Activated CD8-positive, alpha-beta memory T cell treated with anti-CD3 and anti-CD28 coated beads, Interleukin-2, amount 10 ng/mL, durations not matched to agents 7 days and 5 days (primary cell): ENCODE measurements at regions of chr1 and their contacts with region 1.

Region 1: GRCh38 chr1:86499987-86500593 is 31.4 kb downstream of the CLCA1 start:
- DNase-seq: no peak
- ATAC-seq: no peak
- H3K4me3 Mint-ChIP-seq: no peak overlapping the region
- H3K27ac Mint-ChIP-seq: no peak overlapping the region
- H3K4me1 Mint-ChIP-seq: peaks cover 22% of the 10 kb centered on the region
- H3K27me3 Mint-ChIP-seq: peaks cover 30% of the 10 kb centered on the region

Region 2: DNA sequence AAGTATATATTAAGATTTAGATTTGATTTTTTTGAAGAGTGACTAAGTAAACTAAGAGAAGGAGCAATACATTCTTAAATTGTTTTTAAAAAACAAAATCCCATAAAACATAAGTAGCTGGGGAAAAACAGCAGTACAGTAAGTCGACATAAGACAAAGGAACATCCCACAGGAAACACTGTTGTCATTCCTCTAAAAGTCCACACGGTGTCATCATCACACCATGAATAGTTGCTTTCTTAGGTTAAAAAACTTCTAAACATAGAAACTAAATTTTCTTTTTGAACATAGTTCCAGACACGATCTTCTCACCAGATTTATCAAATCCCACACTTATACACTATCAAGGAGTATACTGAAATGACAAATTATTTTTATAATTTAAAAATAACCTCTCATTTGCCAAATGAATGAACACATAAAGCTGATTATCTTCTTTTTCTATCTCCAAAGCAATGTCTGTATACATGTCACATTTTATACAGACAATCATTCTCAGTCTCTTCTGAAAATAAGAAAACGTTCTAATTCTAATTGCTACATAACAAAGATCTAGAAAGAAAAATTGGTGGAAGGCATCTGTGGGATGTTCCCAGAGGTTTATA is 119.7 kb before region 1 on chr1:
- CTCF ChIA-PET with region 1: interaction called, 74 read pairs
- DNase-seq: no peak
- ATAC-seq: peak; percentile 72
- H3K4me3 Mint-ChIP-seq: no peak overlapping the region
- H3K27ac Mint-ChIP-seq: no peak overlapping the region
- H3K4me1 Mint-ChIP-seq: peaks cover 16% of the 10 kb centered on the region
- H3K27me3 Mint-ChIP-seq: no peaks in the 10 kb centered on the region

Region 3: GRCh38 chr1:86395771-86396497 is 104.2 kb before region 1 on chr1 and contains the start of gene ODF2L:
- CTCF ChIA-PET with region 1: interaction called, 14 read pairs
- DNase-seq: peak; percentile 96
- ATAC-seq: peak; percentile 100
- H3K4me3 Mint-ChIP-seq: peak within 1 kb of the TSS; percentile 90
- H3K27ac Mint-ChIP-seq: peak within 1 kb of the TSS; percentile 90
- H3K4me1 Mint-ChIP-seq: peaks cover 48% of the 10 kb centered on the region
- H3K27me3 Mint-ChIP-seq: no peaks in the 10 kb centered on the region
- total RNA-seq, gene ODF2L: 45.6 to 69.2 TPM

Region 4: GRCh38 chr1:86416343-86416742 is 83.7 kb before region 1 on chr1:
- CTCF ChIA-PET with region 1: interaction called, 16 read pairs
- DNase-seq: no peak
- ATAC-seq: no peak
- H3K4me3 Mint-ChIP-seq: no peak overlapping the region
- H3K27ac Mint-ChIP-seq: no peak overlapping the region
- H3K4me1 Mint-ChIP-seq: peaks cover 7% of the 10 kb centered on the region
- H3K27me3 Mint-ChIP-seq: no peaks in the 10 kb centered on the region

Region 5: DNA sequence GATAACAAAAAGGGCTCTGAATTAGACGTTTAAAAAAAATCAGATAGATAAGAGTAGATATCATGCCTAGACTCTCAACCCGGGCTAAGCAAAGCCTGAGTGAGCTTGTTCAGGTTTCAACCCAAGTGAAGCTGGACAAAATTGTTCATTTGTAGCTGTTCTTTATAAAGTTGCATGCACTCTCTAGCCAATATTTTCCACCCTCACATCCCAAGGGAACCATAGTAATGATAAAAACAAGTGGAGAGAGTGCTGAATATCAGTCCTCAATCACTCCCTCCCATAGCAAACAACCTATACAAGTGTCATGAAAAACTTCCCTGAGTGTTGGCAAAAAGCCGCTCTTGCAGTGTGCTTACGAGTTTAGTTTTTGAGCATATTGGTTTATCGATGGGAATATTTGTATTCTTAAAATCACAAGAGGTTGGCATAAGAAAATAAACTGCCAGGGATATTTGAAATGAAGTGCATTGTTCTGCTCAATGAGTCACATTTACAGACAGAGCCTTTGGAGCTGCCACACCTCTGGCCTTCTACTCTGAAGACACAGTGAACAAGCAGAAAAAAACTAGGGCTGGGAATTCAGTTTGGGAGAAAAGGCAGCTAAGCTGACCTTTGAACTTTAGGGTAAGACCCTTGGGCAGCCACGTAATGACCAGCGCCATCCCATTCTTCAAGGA is 78.3 kb before region 1 on chr1:
- CTCF ChIA-PET with region 1: interaction called, 18 read pairs
- DNase-seq: no peak
- ATAC-seq: no peak
- H3K4me3 Mint-ChIP-seq: no peak overlapping the region
- H3K27ac Mint-ChIP-seq: no peak overlapping the region
- H3K4me1 Mint-ChIP-seq: peaks cover 10% of the 10 kb centered on the region
- H3K27me3 Mint-ChIP-seq: peaks cover 9% of the 10 kb centered on the region

Region 6: DNA sequence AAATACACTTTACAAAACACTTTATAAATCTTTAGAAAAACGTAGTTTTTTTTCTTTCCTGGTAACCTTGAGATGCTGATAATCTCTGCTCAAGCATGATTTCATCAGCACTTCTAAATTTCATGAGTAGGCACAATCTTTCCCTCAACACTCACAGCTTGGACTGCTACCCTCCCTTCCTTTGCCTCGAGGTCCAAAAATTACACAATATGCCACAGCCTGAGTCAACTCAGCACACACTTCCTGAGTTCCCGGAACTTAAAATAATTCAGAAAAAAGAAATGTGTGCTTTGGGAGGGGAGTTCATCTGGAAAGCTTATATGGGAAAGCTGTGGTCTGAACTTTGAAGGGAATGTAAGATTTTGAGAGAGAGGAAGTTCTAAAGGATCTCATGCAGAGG is 70.3 kb before region 1 on chr1:
- CTCF ChIA-PET with region 1: interaction called, 18 read pairs
- DNase-seq: peak; percentile 48
- ATAC-seq: peak; percentile 76
- H3K4me3 Mint-ChIP-seq: no peak overlapping the region
- H3K27ac Mint-ChIP-seq: no peak overlapping the region
- H3K4me1 Mint-ChIP-seq: no peaks in the 10 kb centered on the region
- H3K27me3 Mint-ChIP-seq: peaks cover 17% of the 10 kb centered on the region

Region 7: DNA sequence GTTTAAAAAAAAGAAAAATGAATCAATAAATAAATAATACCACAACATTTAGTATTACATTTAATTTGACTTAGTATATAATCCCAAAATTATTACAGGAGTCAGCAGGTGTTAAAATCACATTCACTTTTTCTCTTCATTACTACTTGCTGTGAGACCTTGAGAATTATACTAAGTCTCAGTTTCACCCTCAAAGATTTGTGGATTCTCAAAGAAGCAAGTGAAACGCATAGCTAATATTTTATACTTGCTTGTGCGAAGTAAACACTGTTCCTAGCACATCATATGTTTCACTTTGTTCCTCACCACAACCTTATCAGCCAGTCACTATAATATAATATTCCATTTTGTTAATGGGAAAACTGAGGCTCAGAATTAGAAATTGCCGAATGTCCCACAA is 27.3 kb before region 1 on chr1:
- CTCF ChIA-PET with region 1: interaction called, 19 read pairs
- DNase-seq: no peak
- ATAC-seq: no peak
- H3K4me3 Mint-ChIP-seq: no peak overlapping the region
- H3K27ac Mint-ChIP-seq: no peak overlapping the region
- H3K4me1 Mint-ChIP-seq: no peaks in the 10 kb centered on the region
- H3K27me3 Mint-ChIP-seq: peaks cover 23% of the 10 kb centered on the region